ENCODE measurements at regions of chr7 and their contacts with region 1.

Region 1: GRCh38 chr7:39712751-39713150 is 89.4 kb downstream of the RALA start:
- DNase-seq: no peak
- ATAC-seq: no peak
- H3K4me3 ChIP-seq: no peak overlapping the region
- H3K4me3 Mint-ChIP-seq: no peak overlapping the region
- H3K27ac ChIP-seq: no peak overlapping the region
- H3K27ac Mint-ChIP-seq: no peak overlapping the region
- H3K4me1 ChIP-seq: no peaks in the 10 kb centered on the region
- H3K4me1 Mint-ChIP-seq: peaks cover 3% of the 10 kb centered on the region
- H3K27me3 ChIP-seq: no peaks in the 10 kb centered on the region
- H3K27me3 Mint-ChIP-seq: no peaks in the 10 kb centered on the region
- CTCF ChIP-seq: no peak

Region 2: GRCh38 chr7:39727231-39728012 is 14.7 kb after region 1 on chr7:
- CTCF ChIA-PET with region 1: interaction called, 3 read pairs
- POLR2A ChIA-PET with region 1: interaction called, 4 read pairs
- intact Hi-C with region 1: loop called in 1 of 2 experiments (anchors 2 kb)
- DNase-seq: no peak
- ATAC-seq: no peak
- H3K4me3 ChIP-seq: no peak overlapping the region
- H3K4me3 Mint-ChIP-seq: no peak overlapping the region
- H3K27ac ChIP-seq: no peak overlapping the region
- H3K27ac Mint-ChIP-seq: no peak overlapping the region
- H3K4me1 ChIP-seq: peaks cover 3% of the 10 kb centered on the region
- H3K4me1 Mint-ChIP-seq: peaks cover 5% of the 10 kb centered on the region
- H3K27me3 ChIP-seq: no peaks in the 10 kb centered on the region
- H3K27me3 Mint-ChIP-seq: no peaks in the 10 kb centered on the region
- CTCF ChIP-seq: no peak

Measured in CD8-positive, alpha-beta T cell (primary cell).